ENCODE measurements at regions of chr10 and their contacts with region 1.

Region 1: GRCh38 chr10:43361986-43362839 is 9.2 kb upstream of the FXYD4 start:
- DNase-seq: peak; percentile 96 to 98 (median 98)
- H3K4me3 ChIP-seq: peak overlapping the region; percentile 82 to 97
- H3K4me3 Mint-ChIP-seq: peak overlapping the region; percentile 95 to 100 (median 98)
- H3K27ac ChIP-seq: peak overlapping the region; percentile 92
- H3K27ac Mint-ChIP-seq: peak overlapping the region; percentile 97 to 99 (median 98)
- H3K4me1 ChIP-seq: peaks cover 19% of the 10 kb centered on the region
- H3K4me1 Mint-ChIP-seq: peaks cover 21 to 34% (median 27%) of the 10 kb centered on the region in 4 donors
- H3K27me3 ChIP-seq: no peaks in the 10 kb centered on the region
- H3K27me3 Mint-ChIP-seq: no peaks in the 10 kb centered on the region

Region 2: DNA sequence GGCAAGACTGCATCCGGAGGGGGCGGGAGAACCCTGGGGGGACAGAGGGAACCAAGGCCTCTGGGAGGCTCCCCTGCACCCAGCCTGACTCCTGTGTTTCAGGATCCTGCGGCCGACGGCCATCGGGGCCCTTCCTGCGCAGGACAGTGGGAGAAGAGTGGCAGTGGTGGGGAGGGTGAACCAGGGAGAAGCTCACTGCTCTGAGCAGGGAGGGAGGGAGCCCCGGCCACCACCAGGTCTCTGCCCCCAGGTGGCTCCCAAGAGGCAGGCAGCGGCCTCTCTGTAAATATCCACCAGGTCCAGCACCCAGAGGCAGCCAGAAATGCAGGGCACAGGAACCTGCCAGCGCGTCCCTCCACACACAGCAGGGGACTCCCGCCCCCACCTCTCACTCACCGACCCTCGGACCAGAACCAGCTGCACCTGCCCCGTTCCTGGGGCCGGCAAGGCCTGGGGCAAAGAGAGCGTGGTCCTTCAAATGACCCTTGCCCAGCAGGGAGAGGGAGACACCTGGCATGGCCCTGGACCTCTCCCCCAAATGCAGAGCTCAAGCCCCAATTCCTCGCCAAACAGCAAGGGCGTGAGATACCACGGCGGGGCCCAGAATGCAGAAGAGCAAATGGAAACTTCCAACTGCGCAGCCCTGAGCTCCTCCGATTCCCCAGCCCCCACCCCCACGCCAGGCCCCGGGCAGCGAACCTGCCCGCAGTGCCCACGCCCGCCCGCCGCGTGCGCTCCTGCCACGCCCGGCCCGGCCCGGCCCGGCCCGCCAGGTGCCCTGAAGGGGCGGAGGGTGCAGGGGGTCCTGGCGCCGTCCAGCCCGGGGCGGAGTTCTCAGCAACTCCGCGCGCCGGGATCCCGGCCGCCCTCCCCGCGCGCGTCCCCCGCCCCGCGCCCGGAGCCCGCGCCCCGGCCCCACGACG is 96.2 kb before region 1 on chr10:
- CTCF ChIA-PET with region 1: interaction called, 5 read pairs
- POLR2A ChIA-PET with region 1: interaction called, 16 read pairs
- intact Hi-C with region 1: no loop called
- DNase-seq: peak; percentile 60 to 62 (median 61)
- H3K4me3 ChIP-seq: peak overlapping the region in 1 of 2 donors; percentile 54
- H3K4me3 Mint-ChIP-seq: peak overlapping the region; percentile 85 to 93 (median 89)
- H3K27ac ChIP-seq: peak overlapping the region; percentile 15
- H3K27ac Mint-ChIP-seq: peak overlapping the region; percentile 53 to 91 (median 72)
- H3K4me1 ChIP-seq: peaks cover 10% of the 10 kb centered on the region
- H3K4me1 Mint-ChIP-seq: peaks cover 6 to 24% (median 15%) of the 10 kb centered on the region in 4 donors
- H3K27me3 ChIP-seq: peaks cover 17% of the 10 kb centered on the region
- H3K27me3 Mint-ChIP-seq: peaks cover 5 to 9% of the 10 kb centered on the region in 2 donors

Region 3: GRCh38 chr10:43315535-43316207 is 46.5 kb before region 1 on chr10:
- CTCF ChIA-PET with region 1: no interaction called
- POLR2A ChIA-PET with region 1: no interaction called
- intact Hi-C with region 1: no loop called
- DNase-seq: no peak
- H3K4me3 ChIP-seq: no peak overlapping the region
- H3K4me3 Mint-ChIP-seq: no peak overlapping the region
- H3K27ac ChIP-seq: no peak overlapping the region
- H3K27ac Mint-ChIP-seq: no peak overlapping the region
- H3K4me1 ChIP-seq: peaks cover 2% of the 10 kb centered on the region
- H3K4me1 Mint-ChIP-seq: peaks cover 2 to 13% (median 8%) of the 10 kb centered on the region in 4 donors
- H3K27me3 ChIP-seq: no peaks in the 10 kb centered on the region
- H3K27me3 Mint-ChIP-seq: no peaks in the 10 kb centered on the region

Region 4: GRCh38 chr10:43407576-43408330 is 45.5 kb after region 1 on chr10:
- CTCF ChIA-PET with region 1: no interaction called
- POLR2A ChIA-PET with region 1: interaction called, 38 read pairs
- intact Hi-C with region 1: loop called (anchors 1 kb)
- DNase-seq: peak; percentile 81 to 89 (median 84)
- H3K4me3 ChIP-seq: peak overlapping the region; percentile 83 to 85
- H3K4me3 Mint-ChIP-seq: peak overlapping the region; percentile 94 to 100 (median 98)
- H3K27ac ChIP-seq: peak overlapping the region; percentile 100
- H3K27ac Mint-ChIP-seq: peak overlapping the region; percentile 93 to 100 (median 99)
- H3K4me1 ChIP-seq: peaks cover 39% of the 10 kb centered on the region
- H3K4me1 Mint-ChIP-seq: peaks cover 18 to 53% (median 27%) of the 10 kb centered on the region in 4 donors
- H3K27me3 ChIP-seq: no peaks in the 10 kb centered on the region
- H3K27me3 Mint-ChIP-seq: no peaks in the 10 kb centered on the region

Region 5: GRCh38 chr10:43436400-43437140 is 74.4 kb after region 1 on chr10 and contains the start of gene ZNF487:
- CTCF ChIA-PET with region 1: no interaction called
- POLR2A ChIA-PET with region 1: interaction called, 3 read pairs
- intact Hi-C with region 1: loop called (anchors 5 kb)
- DNase-seq: peak; percentile 93 to 97 (median 94)
- H3K4me3 ChIP-seq: peak within 1 kb of the TSS; percentile 67 to 90
- H3K4me3 Mint-ChIP-seq: peak within 1 kb of the TSS; percentile 97 to 99 (median 97)
- H3K27ac ChIP-seq: peak within 1 kb of the TSS; percentile 96
- H3K27ac Mint-ChIP-seq: peak within 1 kb of the TSS; percentile 99 to 100 (median 99)
- H3K4me1 ChIP-seq: peaks cover 13% of the 10 kb centered on the region
- H3K4me1 Mint-ChIP-seq: peaks cover 15 to 28% (median 21%) of the 10 kb centered on the region in 4 donors
- H3K27me3 ChIP-seq: no peaks in the 10 kb centered on the region
- H3K27me3 Mint-ChIP-seq: no peaks in the 10 kb centered on the region
- total RNA-seq, gene ZNF487: 3.1 to 5.6 TPM

Region 6: GRCh38 chr10:43594944-43595589 is 232.9 kb after region 1 on chr10:
- CTCF ChIA-PET with region 1: no interaction called
- POLR2A ChIA-PET with region 1: no interaction called
- intact Hi-C with region 1: no loop called
- DNase-seq: peak in 4 of 5 donors; percentile 29 to 57 (median 46)
- H3K4me3 ChIP-seq: peak overlapping the region; percentile 21 to 44
- H3K4me3 Mint-ChIP-seq: peak overlapping the region; percentile 81 to 95 (median 89)
- H3K27ac ChIP-seq: peak overlapping the region; percentile 34
- H3K27ac Mint-ChIP-seq: peak overlapping the region; percentile 70 to 95 (median 89)
- H3K4me1 ChIP-seq: peaks cover 25% of the 10 kb centered on the region
- H3K4me1 Mint-ChIP-seq: peaks cover 23 to 32% (median 26%) of the 10 kb centered on the region in 4 donors
- H3K27me3 ChIP-seq: no peaks in the 10 kb centered on the region
- H3K27me3 Mint-ChIP-seq: peaks cover 0 to 1% of the 10 kb centered on the region in 2 donors